ENCODE measurements at regions of chr21 and their contacts with region 1.

Region 1: GRCh38 chr21:46323227-46324128 is at the start of gene C21orf58:
- DNase-seq: peak; percentile 98
- H3K4me3 Mint-ChIP-seq: peak within 1 kb of the TSS; percentile 90
- H3K27ac Mint-ChIP-seq: peak within 1 kb of the TSS; percentile 95
- H3K4me1 Mint-ChIP-seq: peaks cover 30% of the 10 kb centered on the region
- H3K27me3 Mint-ChIP-seq: no peaks in the 10 kb centered on the region
- total RNA-seq, gene C21orf58: 25.8 to 28.1 TPM

Region 2: GRCh38 chr21:46228345-46229051 is 95.0 kb before region 1 on chr21 and contains the start of gene LSS:
- CTCF ChIA-PET with region 1: interaction called, 3 read pairs
- POLR2A ChIA-PET with region 1: no interaction called
- intact Hi-C with region 1: loop called (anchors 2 kb)
- DNase-seq: peak; percentile 97
- H3K4me3 Mint-ChIP-seq: peak within 1 kb of the TSS; percentile 85
- H3K27ac Mint-ChIP-seq: peak within 1 kb of the TSS; percentile 70
- H3K4me1 Mint-ChIP-seq: peaks cover 35% of the 10 kb centered on the region
- H3K27me3 Mint-ChIP-seq: no peaks in the 10 kb centered on the region
- total RNA-seq, gene LSS: 22.7 to 22.8 TPM

Region 3: GRCh38 chr21:46285761-46286496 is 37.5 kb before region 1 on chr21 and contains the start of gene YBEY:
- CTCF ChIA-PET with region 1: interaction called, 9 read pairs
- POLR2A ChIA-PET with region 1: interaction called, 5 read pairs
- intact Hi-C with region 1: loop called (anchors 1 kb)
- DNase-seq: peak; percentile 93
- H3K4me3 Mint-ChIP-seq: peak within 1 kb of the TSS; percentile 98
- H3K27ac Mint-ChIP-seq: peak within 1 kb of the TSS; percentile 96
- H3K4me1 Mint-ChIP-seq: peaks cover 55% of the 10 kb centered on the region
- H3K27me3 Mint-ChIP-seq: no peaks in the 10 kb centered on the region
- total RNA-seq, gene YBEY: 14.4 to 14.8 TPM

Region 4: GRCh38 chr21:46295996-46296752 is 27.3 kb before region 1 on chr21:
- CTCF ChIA-PET with region 1: interaction called, 3 read pairs
- POLR2A ChIA-PET with region 1: interaction called, 13 read pairs
- intact Hi-C with region 1: no loop called
- DNase-seq: peak; percentile 87
- H3K4me3 Mint-ChIP-seq: peak overlapping the region; percentile 59
- H3K27ac Mint-ChIP-seq: peak overlapping the region; percentile 80
- H3K4me1 Mint-ChIP-seq: peaks cover 11% of the 10 kb centered on the region
- H3K27me3 Mint-ChIP-seq: peaks cover 2% of the 10 kb centered on the region

Region 5: DNA sequence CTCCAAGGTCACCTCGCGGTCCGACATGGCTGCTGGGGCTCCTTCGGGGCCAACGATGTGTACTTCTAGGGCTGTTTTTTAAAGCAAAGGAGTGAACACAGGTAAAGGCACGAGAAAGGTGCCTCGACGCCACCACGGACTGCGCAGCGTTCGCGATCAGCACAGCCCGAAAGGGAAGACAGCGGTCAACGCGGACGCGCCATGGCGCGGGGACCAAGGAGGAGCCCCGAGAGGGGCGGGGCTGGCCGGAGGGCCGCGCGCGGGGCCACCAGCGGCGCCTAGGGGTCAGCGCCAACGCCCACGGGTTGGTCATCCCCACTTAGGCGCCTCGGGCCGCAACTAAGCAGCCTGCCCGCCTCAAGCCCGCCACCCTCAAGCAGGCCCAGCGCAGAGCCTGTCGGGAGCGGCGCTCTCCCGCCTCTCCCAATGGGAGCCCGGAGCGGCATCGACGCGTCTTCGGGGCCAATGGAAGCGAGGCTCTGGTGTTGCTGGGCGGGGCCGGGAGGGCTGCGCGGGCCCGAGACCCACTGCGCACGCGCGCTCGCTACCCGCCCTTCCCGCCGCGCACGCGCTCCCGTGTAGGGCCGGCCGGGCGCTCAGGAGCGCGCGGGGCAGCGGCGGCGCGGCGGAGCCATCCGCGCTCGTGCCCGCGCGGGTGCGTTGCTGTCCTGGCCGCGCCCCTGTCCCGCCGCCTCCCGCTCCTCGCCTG is 135.0 kb after region 1 on chr21 and contains the start of gene DIP2A:
- CTCF ChIA-PET with region 1: interaction called, 3 read pairs
- POLR2A ChIA-PET with region 1: no interaction called
- intact Hi-C with region 1: loop called (anchors 1 kb)
- DNase-seq: peak; percentile 96
- H3K4me3 Mint-ChIP-seq: peak within 1 kb of the TSS; percentile 90
- H3K27ac Mint-ChIP-seq: peak within 1 kb of the TSS; percentile 81
- H3K4me1 Mint-ChIP-seq: peaks cover 42% of the 10 kb centered on the region
- H3K27me3 Mint-ChIP-seq: no peaks in the 10 kb centered on the region
- total RNA-seq, gene DIP2A: 32.0 to 35.3 TPM

Measured in activated CD4-positive, alpha-beta memory T cell treated with anti-CD3 and anti-CD28 coated beads for 36 hours (primary cell).